ENCODE measurements at regions of chr1 and their contacts with region 1.

Region 1: DNA sequence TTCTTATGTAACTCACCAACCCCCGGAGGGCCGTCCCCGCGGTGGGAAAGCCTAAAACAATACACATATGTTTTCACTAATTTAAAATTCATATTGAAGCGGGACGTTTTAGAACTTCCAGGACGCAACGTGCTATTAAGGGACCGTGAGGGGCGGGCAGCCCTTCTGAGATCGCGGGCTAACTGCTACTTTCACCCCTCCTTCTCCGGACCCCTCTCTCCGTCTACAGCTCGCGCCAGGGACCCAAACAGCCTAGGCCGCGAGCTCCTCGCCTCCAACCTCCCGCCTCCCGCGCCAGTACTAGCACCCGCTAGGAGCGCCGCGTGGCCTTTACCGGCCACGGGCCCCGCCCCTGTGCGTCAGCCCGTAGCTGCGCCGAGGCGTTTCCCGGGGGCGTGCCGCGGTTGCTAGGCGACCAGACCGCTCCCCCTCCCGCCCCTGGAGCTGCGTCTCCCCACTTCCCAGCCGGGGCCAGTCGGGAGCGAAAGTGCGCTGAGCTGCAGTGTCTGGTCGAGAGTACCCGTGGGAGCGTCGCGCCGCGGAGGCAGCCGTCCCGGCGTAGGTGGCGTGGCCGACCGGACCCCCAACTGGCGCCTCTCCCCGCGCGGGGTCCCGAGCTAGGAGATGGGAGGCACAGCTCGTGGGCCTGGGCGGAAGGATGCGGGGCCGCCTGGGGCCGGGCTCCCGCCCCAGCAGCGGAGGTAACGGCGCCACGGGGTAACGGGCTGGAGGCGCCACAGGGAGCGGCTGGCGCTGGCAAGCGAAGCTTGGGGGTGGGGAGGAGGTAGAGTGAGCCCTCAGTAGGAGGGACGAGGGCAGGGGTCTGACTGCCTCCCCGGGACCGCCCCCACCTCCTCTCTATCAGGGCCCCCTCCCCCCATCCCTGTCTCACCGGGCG is at the start of gene DYRK3:
- DNase-seq: peak; percentile 93
- H3K4me3 ChIP-seq: peak within 1 kb of the TSS; percentile 72 to 90 (median 80)
- H3K27ac ChIP-seq: peak within 1 kb of the TSS; percentile 59
- H3K4me1 ChIP-seq: peaks cover 13% of the 10 kb centered on the region
- H3K27me3 ChIP-seq: no peaks in the 10 kb centered on the region
- CTCF ChIP-seq: peak in 1 of 2 donors; percentile 28
- POLR2A ChIP-seq: peak; percentile 88
- total RNA-seq, gene DYRK3: 7.4 and 10.9 TPM in 2 replicates

Region 2: GRCh38 chr1:205950280-205950679 is 685.0 kb before region 1 on chr1:
- CTCF ChIA-PET with region 1: no interaction called
- POLR2A ChIA-PET with region 1: no interaction called
- dilution Hi-C with region 1: no loop called
- intact Hi-C with region 1: no loop called
- DNase-seq: no peak
- H3K4me3 ChIP-seq: no peak overlapping the region
- H3K27ac ChIP-seq: no peak overlapping the region
- H3K4me1 ChIP-seq: peaks cover 11% of the 10 kb centered on the region
- H3K27me3 ChIP-seq: peaks cover 14 to 19% of the 10 kb centered on the region in 2 experiments
- CTCF ChIP-seq: no peak
- POLR2A ChIP-seq: no peak

Region 3: DNA sequence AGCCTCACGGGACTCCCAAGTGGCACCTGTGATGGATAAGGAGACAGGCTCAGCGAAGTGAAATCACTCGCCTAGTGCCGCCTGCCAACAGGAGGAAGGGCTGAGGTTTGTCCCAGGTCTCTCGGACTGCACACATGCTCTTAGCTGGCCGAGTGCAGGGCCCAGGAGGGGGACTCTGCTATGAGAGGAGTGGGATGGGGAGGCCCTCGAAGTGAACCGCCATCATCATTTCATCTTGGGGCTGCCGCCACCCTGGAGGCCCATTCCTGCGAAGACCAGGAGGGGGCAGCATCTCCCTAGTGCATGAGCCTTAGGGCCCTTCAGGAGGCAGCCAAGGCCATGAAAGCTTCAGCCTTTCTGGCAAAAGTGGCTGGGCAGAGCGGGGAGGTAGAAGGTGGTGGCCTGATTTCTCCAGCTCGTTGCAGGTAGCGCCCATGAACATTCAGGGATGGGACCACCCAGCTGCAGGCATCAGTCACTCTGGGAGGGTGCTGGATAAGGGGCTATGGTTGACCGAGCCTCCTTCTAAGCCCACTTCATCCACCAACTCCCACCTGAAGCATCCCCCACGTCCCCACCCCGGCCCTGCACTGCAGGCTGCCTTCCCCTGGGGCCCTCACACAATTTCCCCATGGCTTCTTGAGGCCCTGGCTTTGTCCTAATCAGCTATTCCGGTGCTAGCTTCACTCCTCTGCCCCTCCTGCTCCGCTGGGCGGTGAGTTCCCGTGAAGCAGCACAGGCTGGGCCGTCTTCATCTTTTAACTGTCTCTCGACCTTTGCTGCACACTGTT is 145.2 kb before region 1 on chr1:
- CTCF ChIA-PET with region 1: interaction called, 5 read pairs
- POLR2A ChIA-PET with region 1: no interaction called
- dilution Hi-C with region 1: no loop called
- intact Hi-C with region 1: loop called (anchors 1 kb)
- DNase-seq: peak; percentile 59
- H3K4me3 ChIP-seq: no peak overlapping the region
- H3K27ac ChIP-seq: no peak overlapping the region
- H3K4me1 ChIP-seq: peaks cover 8% of the 10 kb centered on the region
- H3K27me3 ChIP-seq: no peaks in the 10 kb centered on the region
- CTCF ChIP-seq: peak; percentile 83 to 92
- POLR2A ChIP-seq: no peak

Region 4: DNA sequence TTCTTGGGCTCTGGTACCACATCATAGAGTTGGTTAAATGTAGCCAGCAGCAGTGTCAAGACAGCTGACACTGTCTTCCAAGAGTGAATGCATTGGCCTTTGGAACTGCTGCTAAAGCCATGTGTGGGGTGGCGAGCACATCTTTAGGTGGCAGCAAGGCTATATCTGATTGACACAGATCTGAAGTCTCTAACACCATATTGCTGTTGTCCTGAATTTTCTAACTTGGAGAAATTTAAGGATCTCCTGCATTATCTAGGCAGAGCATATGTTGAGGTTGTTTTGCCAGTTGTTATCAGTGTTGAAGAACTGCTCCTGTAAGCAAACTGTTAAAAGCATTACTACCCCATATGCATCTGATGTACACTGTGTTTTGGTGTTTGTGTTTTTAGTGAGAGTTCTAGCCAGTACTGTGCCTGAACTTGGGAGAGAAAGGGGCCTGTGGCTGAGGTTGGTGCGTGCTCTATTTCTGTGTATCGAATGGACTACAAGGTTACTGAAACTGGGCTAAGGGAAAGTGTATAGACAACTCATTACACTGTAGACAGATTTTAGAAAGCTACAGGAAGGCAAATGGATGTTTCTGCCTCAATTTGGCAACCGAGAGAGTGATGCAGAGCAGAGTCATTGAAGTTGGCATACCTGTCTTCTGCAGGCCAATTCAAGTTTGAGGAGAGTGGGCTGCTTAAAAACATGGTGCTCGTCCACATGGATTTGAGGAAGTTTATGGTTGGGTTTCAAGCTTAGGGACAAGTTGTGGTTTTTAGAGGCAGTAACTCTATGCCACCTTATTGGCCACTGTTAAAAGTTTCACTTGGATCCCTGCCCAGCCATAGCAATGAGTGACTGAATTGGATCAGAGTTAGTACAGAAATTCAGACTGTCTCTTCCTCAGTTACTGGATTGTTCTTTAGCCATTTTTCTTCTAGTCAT is 16.9 kb after region 1 on chr1:
- CTCF ChIA-PET with region 1: interaction called, 663 read pairs
- POLR2A ChIA-PET with region 1: no interaction called
- dilution Hi-C with region 1: no loop called
- intact Hi-C with region 1: no loop called
- DNase-seq: no peak
- H3K4me3 ChIP-seq: no peak overlapping the region
- H3K27ac ChIP-seq: no peak overlapping the region
- H3K4me1 ChIP-seq: no peaks in the 10 kb centered on the region
- H3K27me3 ChIP-seq: peaks cover 2 to 5% of the 10 kb centered on the region in 2 experiments
- CTCF ChIP-seq: no peak
- POLR2A ChIP-seq: no peak

Region 5: GRCh38 chr1:206725109-206725963 is 90.0 kb after region 1 on chr1:
- CTCF ChIA-PET with region 1: interaction called, 6 read pairs
- POLR2A ChIA-PET with region 1: no interaction called
- dilution Hi-C with region 1: no loop called
- intact Hi-C with region 1: loop called (anchors 5 kb)
- DNase-seq: peak; percentile 31
- H3K4me3 ChIP-seq: no peak overlapping the region
- H3K27ac ChIP-seq: no peak overlapping the region
- H3K4me1 ChIP-seq: no peaks in the 10 kb centered on the region
- H3K27me3 ChIP-seq: no peaks in the 10 kb centered on the region
- CTCF ChIP-seq: peak; percentile 64 to 71
- POLR2A ChIP-seq: no peak

Region 6: DNA sequence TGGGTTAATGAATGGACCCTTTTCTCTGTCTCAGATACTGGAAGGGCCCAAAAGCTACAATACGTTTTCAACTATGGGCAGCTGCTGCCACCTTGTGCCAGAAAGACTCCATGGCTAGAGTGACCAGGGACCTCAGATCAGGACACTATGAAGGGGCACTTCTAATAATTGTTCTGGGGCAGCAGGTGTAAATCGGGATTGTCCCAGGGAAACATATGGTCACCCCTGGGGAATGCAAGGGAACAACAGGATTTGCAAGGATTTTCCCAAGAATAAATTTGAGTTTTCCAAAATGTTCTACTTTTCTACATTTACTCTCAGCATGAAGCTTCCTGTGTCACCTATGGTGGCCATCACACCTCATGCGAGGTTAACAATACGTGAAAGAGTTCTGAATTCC is 346.9 kb after region 1 on chr1:
- CTCF ChIA-PET with region 1: interaction called, 16 read pairs
- POLR2A ChIA-PET with region 1: no interaction called
- dilution Hi-C with region 1: no loop called
- intact Hi-C with region 1: no loop called
- DNase-seq: peak; percentile 27
- H3K4me3 ChIP-seq: no peak overlapping the region
- H3K27ac ChIP-seq: no peak overlapping the region
- H3K4me1 ChIP-seq: no peaks in the 10 kb centered on the region
- H3K27me3 ChIP-seq: peaks cover 6 to 12% of the 10 kb centered on the region in 2 experiments
- CTCF ChIP-seq: peak; percentile 27 to 44
- POLR2A ChIP-seq: no peak